Activated CD8-positive, alpha-beta T cell treated with anti-CD3 and anti-CD28 coated beads, Interleukin-2, amount 10 ng/mL, durations not matched to agents 7 days and 5 days (primary cell): ENCODE measurements at regions of chr3 and their contacts with region 1.

Region 1: DNA sequence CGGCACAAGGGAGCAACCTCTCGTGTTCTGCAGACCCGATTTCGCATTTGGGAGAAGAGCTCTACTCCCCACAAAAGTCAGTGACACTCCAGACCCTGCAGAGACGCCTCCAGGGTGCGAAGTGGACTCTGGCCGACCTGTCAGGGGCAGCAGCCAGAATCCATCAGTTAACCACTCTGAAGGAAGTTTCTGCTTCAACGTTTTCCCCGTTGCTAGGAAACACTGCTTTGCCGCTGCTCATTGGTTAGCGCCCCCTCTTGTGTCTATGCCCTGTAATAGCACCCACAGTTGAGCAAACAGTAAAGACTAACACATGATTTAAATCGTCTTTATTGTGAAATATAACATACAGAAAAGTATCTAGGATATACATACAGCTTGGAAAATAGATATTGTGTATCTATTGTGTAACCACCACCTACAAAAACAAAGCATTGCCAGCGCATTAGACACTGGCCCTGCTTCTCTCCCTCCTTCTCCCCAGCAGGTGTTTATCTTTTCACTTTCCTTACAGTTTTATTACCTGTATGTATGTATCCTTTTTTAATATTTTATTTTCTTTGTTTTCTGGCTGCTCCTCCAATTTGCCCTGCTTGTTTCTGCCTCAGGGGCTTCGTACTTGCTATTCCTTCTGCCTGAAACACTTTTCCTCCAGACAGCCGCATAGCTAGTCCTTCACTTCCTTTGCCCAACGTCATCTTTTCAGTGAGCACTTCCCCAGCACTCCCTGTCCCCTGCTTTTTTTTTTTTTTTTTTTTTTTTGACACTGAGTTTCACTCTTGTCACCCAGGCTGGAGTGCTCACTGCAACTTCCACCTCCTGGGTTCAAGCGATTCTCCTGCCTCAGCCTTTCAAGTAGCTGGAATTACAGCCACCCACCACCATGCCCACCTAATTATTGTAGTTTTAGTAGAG is 38.8 kb downstream of the TMEM40 start:
- DNase-seq: peak; percentile 83
- ATAC-seq: peak; percentile 93
- H3K4me3 Mint-ChIP-seq: no peak overlapping the region
- H3K27ac Mint-ChIP-seq: no peak overlapping the region
- H3K4me1 Mint-ChIP-seq: peaks cover 9% of the 10 kb centered on the region
- H3K27me3 Mint-ChIP-seq: no peaks in the 10 kb centered on the region

Region 2: GRCh38 chr3:12706504-12707253 is 13.6 kb before region 1 on chr3:
- CTCF ChIA-PET with region 1: interaction called, 20 read pairs
- POLR2A ChIA-PET with region 1: no interaction called
- DNase-seq: peak; percentile 68
- ATAC-seq: peak; percentile 97
- H3K4me3 Mint-ChIP-seq: no peak overlapping the region
- H3K27ac Mint-ChIP-seq: no peak overlapping the region
- H3K4me1 Mint-ChIP-seq: no peaks in the 10 kb centered on the region
- H3K27me3 Mint-ChIP-seq: peaks cover 12% of the 10 kb centered on the region